Kidney (tissue), 22 donors: ENCODE measurements at regions of chr15 and their contacts with region 1.

Region 1: DNA sequence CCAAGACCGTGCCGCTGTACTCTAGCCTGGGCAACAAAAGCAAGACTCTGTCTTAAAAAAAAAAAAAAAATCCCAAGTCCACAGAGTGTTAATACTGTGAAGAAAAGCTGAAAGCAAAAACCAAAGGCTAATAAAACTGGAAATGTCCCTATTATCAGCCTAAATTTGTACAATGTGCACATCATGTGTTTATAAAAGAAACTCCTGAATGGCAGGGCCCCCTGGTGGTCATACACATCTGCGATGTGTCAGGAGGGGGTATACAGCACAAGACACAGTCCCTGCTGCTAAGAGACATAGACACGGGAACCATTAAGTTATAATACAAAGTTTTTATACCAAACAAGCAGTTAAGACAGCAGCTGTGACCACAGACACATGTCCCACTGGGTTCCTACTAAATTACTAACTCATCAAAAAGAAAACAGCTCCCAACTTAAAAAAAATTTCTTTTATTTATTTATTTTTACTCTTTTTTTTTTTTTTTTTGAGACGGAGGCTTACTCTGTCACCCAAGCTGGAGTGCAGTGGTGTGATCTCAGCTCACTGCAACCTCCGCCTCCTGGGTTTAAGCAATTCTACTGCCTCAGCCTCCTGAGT is 31.0 kb downstream of the IDH2 start:
- DNase-seq: peak; percentile 78 to 93 (median 82)
- H3K4me3 ChIP-seq: no peak overlapping the region
- H3K27ac ChIP-seq: no peak overlapping the region
- H3K4me1 ChIP-seq: peaks cover 0 to 15% (median 0%) of the 10 kb centered on the region in 3 donors
- H3K27me3 ChIP-seq: no peaks in the 10 kb centered on the region
- CTCF ChIP-seq: peak; percentile 77

Region 2: GRCh38 chr15:89732451-89733172 is 338.7 kb before region 1 on chr15:
- intact Hi-C with region 1: loop called (anchors 10 kb)
- DNase-seq: peak in 1 of 5 donors; percentile 42
- H3K4me3 ChIP-seq: no peak overlapping the region
- H3K27ac ChIP-seq: no peak overlapping the region
- H3K4me1 ChIP-seq: peaks cover 0 to 3% (median 0%) of the 10 kb centered on the region in 3 donors
- H3K27me3 ChIP-seq: no peaks in the 10 kb centered on the region
- CTCF ChIP-seq: no peak

Region 3: DNA sequence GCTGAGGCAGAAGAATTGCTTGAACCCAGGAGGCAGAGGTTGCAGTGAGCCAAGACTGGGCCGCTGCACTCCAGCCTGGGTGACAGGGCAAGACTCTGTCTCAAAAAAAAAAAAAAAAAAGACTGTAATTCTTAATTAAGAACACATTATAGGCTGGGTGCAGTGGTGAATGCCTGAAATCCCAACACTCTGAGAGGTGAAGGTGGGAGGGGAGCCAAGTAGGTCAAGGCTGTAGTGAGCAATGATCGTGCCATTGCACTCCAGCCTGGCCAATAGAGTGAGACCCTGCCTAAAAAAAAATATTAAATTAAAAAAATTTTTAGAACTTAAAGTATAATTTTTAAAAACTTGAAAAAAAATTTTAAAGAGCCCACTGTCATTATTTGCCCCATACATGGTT is 145.2 kb before region 1 on chr15:
- intact Hi-C with region 1: no loop called
- DNase-seq: no peak
- H3K4me3 ChIP-seq: no peak overlapping the region
- H3K27ac ChIP-seq: no peak overlapping the region
- H3K4me1 ChIP-seq: no peaks in the 10 kb centered on the region
- H3K27me3 ChIP-seq: no peaks in the 10 kb centered on the region
- CTCF ChIP-seq: no peak

Region 4: GRCh38 chr15:89993349-89993748 is 78.0 kb before region 1 on chr15:
- intact Hi-C with region 1: no loop called
- DNase-seq: no peak
- H3K4me3 ChIP-seq: no peak overlapping the region
- H3K27ac ChIP-seq: no peak overlapping the region
- H3K4me1 ChIP-seq: no peaks in the 10 kb centered on the region
- H3K27me3 ChIP-seq: no peaks in the 10 kb centered on the region
- CTCF ChIP-seq: no peak

Region 5: DNA sequence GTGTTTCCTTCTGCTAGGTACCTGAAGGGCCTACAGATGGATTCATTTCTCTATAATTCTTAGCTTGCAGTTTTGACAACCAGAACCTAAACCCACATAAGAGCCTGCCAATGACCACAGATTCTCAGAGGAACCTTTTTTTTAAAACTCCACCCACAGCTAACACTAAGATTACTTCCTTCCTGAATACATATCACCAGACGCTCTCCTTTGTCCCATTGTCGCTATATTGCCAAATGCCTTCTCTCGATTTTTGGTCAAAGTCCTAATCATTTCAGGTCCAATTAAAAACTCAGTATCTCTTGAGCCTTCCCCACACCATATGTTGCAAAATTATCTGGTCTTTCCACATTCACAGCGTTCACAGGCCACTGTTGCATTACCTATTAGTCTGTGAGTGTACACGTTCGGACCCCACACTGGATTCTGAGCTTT is 57.8 kb before region 1 on chr15:
- intact Hi-C with region 1: no loop called
- DNase-seq: no peak
- H3K4me3 ChIP-seq: no peak overlapping the region
- H3K27ac ChIP-seq: no peak overlapping the region
- H3K4me1 ChIP-seq: no peaks in the 10 kb centered on the region
- H3K27me3 ChIP-seq: no peaks in the 10 kb centered on the region
- CTCF ChIP-seq: no peak

Region 6: DNA sequence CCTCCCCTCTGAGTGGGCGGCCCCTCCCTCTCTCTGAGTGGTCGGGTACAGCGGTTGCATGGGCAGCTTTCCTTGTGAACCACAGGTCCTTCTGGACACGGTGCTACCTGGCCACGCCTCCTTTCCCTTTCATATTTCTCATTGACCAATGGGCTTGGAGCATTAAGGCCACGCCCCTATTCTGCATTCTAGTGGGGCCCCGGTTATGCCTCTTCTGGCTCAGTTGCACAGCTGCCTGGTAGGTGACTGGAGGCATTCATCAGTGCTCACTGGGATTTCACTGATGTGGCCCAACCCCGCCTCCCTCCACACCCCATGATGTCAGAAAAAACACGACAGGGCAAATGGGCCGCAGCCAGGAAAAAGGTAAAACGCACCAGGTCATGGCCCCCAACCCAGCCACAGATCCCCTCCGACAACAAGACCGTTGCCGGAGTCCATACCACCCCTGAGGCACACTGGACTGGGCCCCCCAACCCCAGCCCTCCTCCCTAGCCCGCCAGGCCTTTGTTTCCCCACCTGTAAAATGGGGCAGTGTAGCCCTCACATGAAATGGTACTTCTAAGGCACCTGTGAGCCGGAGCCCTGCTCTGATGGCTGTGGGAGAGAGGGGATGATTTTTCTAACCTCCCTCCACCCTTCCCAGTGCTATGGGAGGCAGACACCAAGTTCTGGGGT is 220.5 kb after region 1 on chr15:
- intact Hi-C with region 1: no loop called
- DNase-seq: peak in 1 of 5 donors; percentile 17
- H3K4me3 ChIP-seq: no peak overlapping the region
- H3K27ac ChIP-seq: no peak overlapping the region
- H3K4me1 ChIP-seq: no peaks in the 10 kb centered on the region
- H3K27me3 ChIP-seq: no peaks in the 10 kb centered on the region
- CTCF ChIP-seq: no peak